ENCODE measurements at regions of chr7 and their contacts with region 1.

Region 1: GRCh38 chr7:100503345-100503725 is 19.6 kb downstream of the NYAP1 start:
- DNase-seq: peak in 1 of 2 experiments; percentile 91
- H3K4me3 ChIP-seq: peak overlapping the region; percentile 35; the same call in 1 of the 2 replicates
- H3K27ac ChIP-seq: peak overlapping the region; percentile 98
- H3K4me1 ChIP-seq: peaks cover 44% of the 10 kb centered on the region
- H3K27me3 ChIP-seq: no peaks in the 10 kb centered on the region
- CTCF ChIP-seq: no peak

Region 2: GRCh38 chr7:100257017-100257416 is 246.3 kb before region 1 on chr7:
- CTCF ChIA-PET with region 1: no interaction called
- POLR2A ChIA-PET with region 1: no interaction called
- intact Hi-C with region 1: no loop called
- DNase-seq: no peak
- H3K4me3 ChIP-seq: no peak overlapping the region
- H3K27ac ChIP-seq: no peak overlapping the region
- H3K4me1 ChIP-seq: no peaks in the 10 kb centered on the region
- H3K27me3 ChIP-seq: no peaks in the 10 kb centered on the region
- CTCF ChIP-seq: no peak

Region 3: GRCh38 chr7:100380196-100380595 is 123.1 kb before region 1 on chr7:
- CTCF ChIA-PET with region 1: no interaction called
- POLR2A ChIA-PET with region 1: no interaction called
- intact Hi-C with region 1: no loop called
- DNase-seq: no peak
- H3K4me3 ChIP-seq: no peak overlapping the region
- H3K27ac ChIP-seq: no peak overlapping the region
- H3K4me1 ChIP-seq: no peaks in the 10 kb centered on the region
- H3K27me3 ChIP-seq: no peaks in the 10 kb centered on the region
- CTCF ChIP-seq: no peak

Region 4: GRCh38 chr7:100545360-100546128 is 42.2 kb after region 1 on chr7:
- CTCF ChIA-PET with region 1: interaction called, 6 read pairs
- POLR2A ChIA-PET with region 1: no interaction called
- intact Hi-C with region 1: loop called (anchors 1 kb)
- DNase-seq: peak; percentile 89 to 96
- H3K4me3 ChIP-seq: peak overlapping the region; percentile 33; the same call in 1 of the 2 replicates
- H3K27ac ChIP-seq: peak overlapping the region; percentile 98
- H3K4me1 ChIP-seq: peaks cover 84% of the 10 kb centered on the region
- H3K27me3 ChIP-seq: no peaks in the 10 kb centered on the region
- CTCF ChIP-seq: no peak

Region 5: GRCh38 chr7:100556541-100556940 is 53.2 kb after region 1 on chr7:
- CTCF ChIA-PET with region 1: no interaction called
- POLR2A ChIA-PET with region 1: interaction called, 18 read pairs
- intact Hi-C with region 1: no loop called
- DNase-seq: no peak
- H3K4me3 ChIP-seq: no peak overlapping the region
- H3K27ac ChIP-seq: no peak overlapping the region
- H3K4me1 ChIP-seq: 0 out of 2 replicates have a peak, but pooled peaks cover 8% of the 10 kb centered on the region
- H3K27me3 ChIP-seq: no peaks in the 10 kb centered on the region
- CTCF ChIP-seq: no peak

Region 6: DNA sequence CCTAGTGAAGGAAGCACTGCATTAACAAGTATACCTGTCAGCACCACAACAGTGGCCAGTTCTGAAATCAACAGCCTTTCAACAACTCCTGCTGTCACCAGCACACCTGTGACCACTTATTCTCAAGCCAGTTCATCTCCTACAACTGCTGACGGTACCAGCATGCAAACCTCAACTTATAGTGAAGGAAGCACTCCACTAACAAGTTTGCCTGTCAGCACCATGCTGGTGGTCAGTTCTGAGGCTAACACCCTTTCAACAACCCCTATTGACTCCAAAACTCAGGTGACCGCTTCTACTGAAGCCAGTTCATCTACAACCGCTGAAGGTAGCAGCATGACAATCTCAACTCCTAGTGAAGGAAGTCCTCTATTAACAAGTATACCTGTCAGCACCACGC is 532.6 kb after region 1 on chr7:
- CTCF ChIA-PET with region 1: no interaction called
- POLR2A ChIA-PET with region 1: no interaction called
- intact Hi-C with region 1: no loop called
- DNase-seq: no peak
- H3K4me3 ChIP-seq: no peak overlapping the region
- H3K27ac ChIP-seq: no peak overlapping the region
- H3K4me1 ChIP-seq: no peaks in the 10 kb centered on the region
- H3K27me3 ChIP-seq: peaks cover 94% of the 10 kb centered on the region
- CTCF ChIP-seq: no peak